BJ (cell line): ENCODE measurements at regions of chr18 and their contacts with region 1.

Region 1: DNA sequence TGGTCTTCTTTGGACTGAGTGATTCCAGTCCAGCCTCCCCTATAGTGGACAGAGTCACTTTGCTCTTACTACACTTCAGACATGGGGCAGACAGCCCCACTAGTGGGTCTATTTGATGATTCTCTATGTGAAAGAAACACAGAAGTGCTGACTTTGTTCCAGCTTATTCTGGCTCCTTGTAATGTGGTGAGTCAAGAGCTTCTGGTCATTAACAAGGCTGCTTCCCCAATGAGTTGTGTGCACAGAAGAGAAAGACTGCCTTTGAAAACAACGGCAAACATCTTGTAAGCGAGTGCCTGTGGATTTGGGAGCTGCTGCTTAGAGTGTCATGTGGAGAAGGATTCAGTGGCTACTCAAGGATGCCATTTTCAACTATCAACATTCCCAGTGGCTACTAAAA is 39.1 kb downstream of the RMC1 start:
- DNase-seq: no peak
- H3K4me3 ChIP-seq: no peak overlapping the region
- H3K27me3 ChIP-seq: no peaks in the 10 kb centered on the region
- CTCF ChIP-seq: no peak

Region 2: DNA sequence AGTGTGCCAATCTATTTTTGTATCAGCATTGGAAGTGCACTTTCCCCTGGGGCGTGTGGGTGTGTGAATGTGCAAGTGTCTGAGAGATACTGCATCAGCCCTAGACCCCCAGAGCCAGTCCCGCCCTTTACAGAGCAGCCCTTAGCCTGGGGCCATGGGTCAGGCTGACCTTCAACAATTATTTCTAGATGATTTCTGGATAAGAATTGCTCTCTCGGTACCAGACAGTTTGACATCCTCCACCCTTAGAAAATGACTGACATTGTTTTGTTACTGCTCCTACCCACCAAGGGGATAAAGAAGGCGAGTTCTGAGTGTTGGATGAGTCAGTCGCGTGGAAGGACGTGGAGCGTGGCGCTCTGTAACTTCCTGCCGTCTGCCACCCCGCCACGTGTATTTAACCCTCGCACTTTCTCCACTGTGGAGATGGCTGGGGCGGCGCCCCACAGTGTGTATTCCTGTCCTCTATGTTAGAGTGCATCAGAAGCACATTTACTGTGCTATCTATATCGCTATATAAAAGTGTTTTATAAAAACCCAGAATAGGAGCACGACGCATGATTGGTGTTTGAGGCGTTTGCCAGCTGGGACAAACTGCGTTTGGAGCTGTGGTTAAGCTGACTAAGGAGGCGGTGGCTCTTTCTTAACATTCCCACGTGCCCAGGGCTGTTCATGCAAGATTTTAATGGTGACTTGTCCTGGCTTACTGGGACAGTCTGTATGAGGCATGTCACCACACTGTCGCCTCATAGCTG is 284.5 kb before region 1 on chr18:
- CTCF ChIA-PET with region 1: no interaction called
- POLR2A ChIA-PET with region 1: no interaction called
- DNase-seq: no peak
- H3K4me3 ChIP-seq: no peak overlapping the region
- H3K27me3 ChIP-seq: no peaks in the 10 kb centered on the region
- CTCF ChIP-seq: no peak

Region 3: GRCh38 chr18:23675896-23676295 is 133.4 kb after region 1 on chr18:
- CTCF ChIA-PET with region 1: no interaction called
- POLR2A ChIA-PET with region 1: interaction called, 13 read pairs
- DNase-seq: no peak
- H3K4me3 ChIP-seq: no peak overlapping the region
- H3K27me3 ChIP-seq: peaks cover 3% of the 10 kb centered on the region
- CTCF ChIP-seq: no peak

Region 4: DNA sequence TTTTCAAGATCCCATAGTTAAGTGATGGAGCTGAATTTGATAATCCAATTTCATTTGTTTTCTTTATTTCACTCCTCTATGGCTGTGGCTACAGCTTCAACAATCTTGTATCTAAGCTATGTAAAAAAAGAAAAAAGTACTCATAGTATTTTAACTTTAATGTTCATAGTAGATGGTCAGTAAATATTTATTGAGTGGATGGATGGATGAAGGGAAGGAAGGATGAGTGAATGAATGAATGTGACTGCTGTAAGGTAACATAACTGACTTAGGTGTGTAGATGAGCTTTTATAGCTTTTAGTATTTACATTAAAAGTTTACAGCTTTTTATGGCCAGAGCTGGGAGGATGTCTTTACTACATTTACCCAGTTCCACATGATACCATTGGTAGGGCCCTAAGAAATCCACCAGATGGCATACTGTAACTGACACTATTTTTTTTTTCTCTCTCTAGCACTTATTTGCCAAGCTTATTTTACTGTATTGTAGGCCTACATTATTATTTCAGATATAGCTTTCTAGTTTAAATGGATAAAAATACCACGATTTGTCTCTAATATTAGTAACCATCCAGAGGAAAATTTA is 904.6 kb after region 1 on chr18:
- CTCF ChIA-PET with region 1: no interaction called
- POLR2A ChIA-PET with region 1: interaction called, 21 read pairs
- DNase-seq: no peak
- H3K4me3 ChIP-seq: no peak overlapping the region
- H3K27me3 ChIP-seq: no peaks in the 10 kb centered on the region
- CTCF ChIP-seq: peak; percentile 15; the same call in 1 of the 2 replicates